GM12878 (cell line): ENCODE measurements at regions of chr2 and their contacts with region 1.

Region 1: DNA sequence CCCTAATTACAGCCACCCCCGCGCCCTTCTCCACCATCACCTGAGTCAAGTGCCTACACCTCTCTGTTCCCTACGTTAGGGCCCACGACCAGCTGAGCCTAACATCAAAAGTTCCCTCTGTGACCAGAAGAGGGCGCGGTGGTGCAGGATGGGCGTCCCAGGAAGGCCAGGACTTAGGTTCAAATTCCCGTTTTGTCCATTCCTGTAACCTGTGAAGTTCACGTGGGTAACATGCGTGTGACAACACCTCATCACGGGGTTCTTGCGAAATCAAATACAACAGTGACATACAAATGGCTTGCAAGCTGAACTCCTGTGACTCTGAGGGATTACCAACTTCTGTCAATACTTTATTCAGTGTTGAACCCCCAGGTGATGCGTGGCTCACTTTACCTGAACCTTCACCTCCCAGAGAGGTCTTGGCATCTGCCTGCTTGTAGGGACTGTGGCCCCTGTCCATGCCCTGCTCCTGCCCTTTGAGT is 207.9 kb downstream of the ARL4C start:
- DNase-seq: no peak
- ATAC-seq: peak; percentile 18; the same call in 2 of the 3 replicates
- H3K4me3 ChIP-seq: no peak overlapping the region
- H3K27ac ChIP-seq: no peak overlapping the region; the same call in 1 of the 2 replicates
- H3K4me1 ChIP-seq: peaks cover 39% of the 10 kb centered on the region
- H3K27me3 ChIP-seq: no peaks in the 10 kb centered on the region
- CTCF ChIP-seq: peak; percentile 73 to 84 (median 82)
- EP300 ChIP-seq: no peak
- POLR2A ChIP-seq: no peak
- RAD21 ChIP-seq: peak; percentile 65

Region 2: DNA sequence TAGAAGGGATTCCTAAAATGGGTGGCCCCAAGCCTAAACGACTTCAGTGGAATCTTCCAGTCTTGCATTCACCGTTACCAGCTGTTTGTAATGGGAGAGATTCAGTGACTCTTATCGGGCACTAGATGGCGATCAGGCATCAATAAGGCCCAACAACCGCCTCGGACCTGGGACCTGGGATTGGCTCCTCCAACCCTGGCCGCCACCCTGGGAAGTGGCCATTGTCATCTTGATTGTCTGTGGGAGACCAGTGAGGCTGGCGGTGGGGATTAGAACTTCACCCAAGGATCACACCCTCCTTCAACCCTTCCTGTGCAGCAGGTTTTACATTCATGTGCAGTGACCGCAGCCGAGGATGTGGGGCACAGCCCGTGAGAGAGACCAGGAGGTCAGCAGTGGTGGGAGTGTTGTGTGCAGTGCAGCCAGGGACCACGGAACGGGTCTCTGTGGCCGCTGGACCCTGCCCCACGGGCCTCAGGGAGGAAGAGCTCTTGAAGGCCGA is 153.2 kb before region 1 on chr2:
- CTCF ChIA-PET with region 1: no interaction called
- POLR2A ChIA-PET with region 1: no interaction called
- RAD21 ChIA-PET with region 1: interaction called, 3 read pairs
- SMC1A ChIA-PET with region 1: interaction called, 4 read pairs
- in situ Hi-C with region 1: no loop called
- intact Hi-C with region 1: loop called (anchors 1 kb)
- DNase-seq: peak; percentile 5
- ATAC-seq: peak; percentile 88
- H3K4me3 ChIP-seq: no peak overlapping the region
- H3K27ac ChIP-seq: no peak overlapping the region
- H3K4me1 ChIP-seq: no peaks in the 10 kb centered on the region
- H3K27me3 ChIP-seq: no peaks in the 10 kb centered on the region; a peak in 3 of 4 replicates
- CTCF ChIP-seq: peak; percentile 62 to 79 (median 68)
- EP300 ChIP-seq: no peak
- POLR2A ChIP-seq: no peak
- RAD21 ChIP-seq: peak; percentile 70

Region 3: DNA sequence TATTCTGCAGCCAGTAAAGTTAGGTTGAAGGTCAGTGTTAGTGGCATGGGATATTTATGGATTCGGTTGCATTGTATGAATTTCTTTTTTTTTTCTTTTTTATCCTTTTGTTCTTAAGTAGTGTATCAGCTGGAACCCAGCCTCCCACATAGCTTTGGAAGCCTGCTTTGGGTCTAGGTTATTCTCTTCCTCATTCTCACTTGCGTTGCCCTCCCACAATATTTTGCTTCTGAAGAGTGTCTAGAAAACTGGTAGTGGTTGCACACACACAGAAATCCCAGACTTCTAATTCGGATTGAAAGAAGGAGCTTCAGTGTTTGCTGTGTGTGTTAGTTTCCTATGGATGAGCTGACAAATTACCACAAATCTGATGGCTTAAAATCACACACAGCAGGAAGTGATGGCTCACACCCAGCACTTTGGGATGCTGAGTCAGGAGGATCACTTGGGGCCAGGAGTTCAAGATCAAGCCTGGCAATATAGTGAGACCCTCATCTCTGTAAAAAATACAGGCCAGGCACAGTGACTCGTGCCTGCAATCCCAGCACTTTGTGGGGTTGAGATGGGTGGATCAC is 103.1 kb after region 1 on chr2:
- CTCF ChIA-PET with region 1: no interaction called
- POLR2A ChIA-PET with region 1: no interaction called
- RAD21 ChIA-PET with region 1: no interaction called
- SMC1A ChIA-PET with region 1: no interaction called
- in situ Hi-C with region 1: no loop called
- intact Hi-C with region 1: loop called (anchors 5 kb)
- DNase-seq: no peak
- ATAC-seq: no peak
- H3K4me3 ChIP-seq: no peak overlapping the region
- H3K27ac ChIP-seq: no peak overlapping the region
- H3K4me1 ChIP-seq: no peaks in the 10 kb centered on the region
- H3K27me3 ChIP-seq: no peaks in the 10 kb centered on the region
- CTCF ChIP-seq: no peak
- EP300 ChIP-seq: no peak
- POLR2A ChIP-seq: no peak
- RAD21 ChIP-seq: no peak

Region 4: DNA sequence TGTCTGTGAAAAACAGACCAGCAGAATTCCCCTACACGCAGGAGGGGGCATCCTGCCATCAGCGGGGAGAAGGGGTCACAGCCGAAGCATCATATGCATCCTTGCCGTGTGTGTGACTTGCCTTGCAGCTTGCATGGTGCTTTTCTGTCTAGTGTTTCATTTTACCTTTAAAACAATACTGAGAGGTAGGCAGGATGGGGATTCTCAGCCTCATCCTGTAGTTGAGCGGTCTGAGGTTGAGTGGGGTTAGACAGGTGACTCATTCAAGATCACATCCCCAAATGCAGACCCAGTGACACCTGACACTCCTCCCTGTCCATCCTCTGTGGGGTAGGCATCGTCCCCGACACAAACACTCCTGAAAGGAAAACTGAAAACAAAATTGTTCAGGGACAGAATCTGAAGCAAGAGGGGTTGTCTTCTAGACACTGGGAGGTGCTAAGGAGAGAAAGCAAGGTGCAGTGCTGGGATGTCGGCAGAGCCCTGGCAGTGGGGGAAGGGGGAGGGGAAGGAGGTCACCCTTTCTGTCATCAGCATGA is 200.0 kb after region 1 on chr2:
- CTCF ChIA-PET with region 1: no interaction called
- POLR2A ChIA-PET with region 1: interaction called, 3 read pairs
- RAD21 ChIA-PET with region 1: no interaction called
- SMC1A ChIA-PET with region 1: interaction called, 5 read pairs
- in situ Hi-C with region 1: no loop called
- intact Hi-C with region 1: loop called (anchors 1 kb)
- DNase-seq: peak; percentile 51
- ATAC-seq: peak; percentile 77
- H3K4me3 ChIP-seq: no peak overlapping the region
- H3K27ac ChIP-seq: no peak overlapping the region
- H3K4me1 ChIP-seq: peaks cover 16% of the 10 kb centered on the region
- H3K27me3 ChIP-seq: no peaks in the 10 kb centered on the region
- CTCF ChIP-seq: no peak
- EP300 ChIP-seq: no peak
- POLR2A ChIP-seq: no peak
- RAD21 ChIP-seq: no peak

Region 5: GRCh38 chr2:234544659-234545611 is 255.9 kb after region 1 on chr2:
- CTCF ChIA-PET with region 1: interaction called, 22 read pairs
- POLR2A ChIA-PET with region 1: no interaction called
- RAD21 ChIA-PET with region 1: interaction called, 3 read pairs
- SMC1A ChIA-PET with region 1: interaction called, 5 read pairs
- in situ Hi-C with region 1: no loop called
- intact Hi-C with region 1: no loop called
- DNase-seq: no peak
- ATAC-seq: peak; percentile 93
- H3K4me3 ChIP-seq: no peak overlapping the region
- H3K27ac ChIP-seq: no peak overlapping the region
- H3K4me1 ChIP-seq: no peaks in the 10 kb centered on the region
- H3K27me3 ChIP-seq: no peaks in the 10 kb centered on the region; a peak in 1 of 4 replicates
- CTCF ChIP-seq: peak; percentile 77 to 90 (median 82)
- EP300 ChIP-seq: no peak
- POLR2A ChIP-seq: no peak
- RAD21 ChIP-seq: peak; percentile 57